Activated CD8-positive, alpha-beta T cell treated with anti-CD3 and anti-CD28 coated beads for 36 hours (primary cell): ENCODE measurements at regions of chr21 and their contacts with region 1.

Region 1: DNA sequence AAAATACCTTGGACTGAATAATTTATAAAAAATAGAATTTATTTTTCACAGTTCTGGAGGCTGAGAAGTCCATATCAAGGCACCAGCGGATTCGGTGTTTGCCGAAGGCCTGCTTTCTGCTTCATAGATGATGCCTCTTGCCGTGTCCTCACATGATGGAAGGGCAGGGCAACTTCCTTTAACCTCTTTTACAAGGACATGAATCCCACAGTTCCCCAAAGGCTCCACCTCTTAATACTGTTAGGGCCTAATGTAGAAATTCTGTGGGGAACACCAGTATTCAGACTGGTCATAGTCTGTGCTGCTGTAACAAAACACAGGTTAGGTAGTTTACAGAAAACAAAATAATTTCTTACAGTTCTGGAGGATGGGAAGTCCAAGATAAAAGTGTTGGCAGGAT is 25.9 kb downstream of the DYRK1A start:
- DNase-seq: no peak
- ATAC-seq: no peak
- H3K4me3 Mint-ChIP-seq: no peak overlapping the region
- H3K27ac Mint-ChIP-seq: peak overlapping the region; percentile 21
- H3K4me1 Mint-ChIP-seq: peaks cover 79% of the 10 kb centered on the region
- H3K27me3 Mint-ChIP-seq: no peaks in the 10 kb centered on the region
- CTCF ChIP-seq: no peak

Region 2: GRCh38 chr21:37380349-37381323 is 11.8 kb before region 1 on chr21:
- CTCF ChIA-PET with region 1: interaction called, 13 read pairs
- POLR2A ChIA-PET with region 1: interaction called, 3 read pairs
- intact Hi-C with region 1: no loop called
- DNase-seq: no peak
- ATAC-seq: no peak
- H3K4me3 Mint-ChIP-seq: no peak overlapping the region
- H3K27ac Mint-ChIP-seq: peak overlapping the region; percentile 17
- H3K4me1 Mint-ChIP-seq: peaks cover 84% of the 10 kb centered on the region
- H3K27me3 Mint-ChIP-seq: no peaks in the 10 kb centered on the region
- CTCF ChIP-seq: no peak

Region 3: DNA sequence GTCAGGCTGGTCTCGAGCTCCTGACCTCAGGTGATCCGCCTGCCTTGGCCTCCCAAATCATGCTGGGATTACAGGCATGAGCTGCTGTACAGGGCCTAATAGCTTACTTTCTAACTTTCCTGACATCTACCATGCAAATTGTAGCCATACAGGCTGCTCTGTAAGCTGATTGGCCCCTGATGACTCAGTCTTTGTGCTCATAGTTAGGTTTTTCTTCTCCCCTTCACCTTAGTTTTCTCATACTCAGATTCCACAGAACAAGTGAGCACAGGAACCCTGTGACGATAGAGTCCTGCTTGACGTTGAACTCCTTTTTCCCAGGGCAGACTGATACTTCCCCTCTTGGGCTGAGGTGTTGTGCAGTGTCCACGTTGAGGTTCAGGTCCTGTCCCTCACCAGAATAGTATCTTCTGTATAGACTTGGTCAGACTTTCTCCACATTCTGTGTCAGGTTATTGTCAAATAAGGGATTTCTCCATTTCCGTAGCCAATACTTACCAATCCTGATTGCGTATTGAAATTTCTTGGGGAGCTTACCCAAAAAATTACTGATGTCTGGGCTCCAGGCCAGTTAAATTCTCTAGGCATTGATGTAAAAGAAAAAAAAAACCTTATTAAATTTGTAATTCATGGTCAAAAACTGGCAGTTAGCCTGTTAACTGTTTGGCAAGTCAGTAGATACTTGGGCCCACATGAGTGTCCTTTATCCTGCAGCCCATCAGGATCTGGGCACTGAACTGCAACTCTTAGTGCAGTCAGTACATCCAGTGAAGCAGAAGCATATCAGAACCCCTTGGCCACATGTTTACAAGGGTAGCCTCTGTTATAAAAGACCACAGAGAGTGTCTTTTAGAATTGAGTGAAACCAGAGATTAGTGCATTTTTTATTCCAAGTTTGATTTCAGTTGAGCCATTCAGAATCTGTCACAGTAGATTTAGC is 92.4 kb after region 1 on chr21:
- CTCF ChIA-PET with region 1: no interaction called
- POLR2A ChIA-PET with region 1: no interaction called
- intact Hi-C with region 1: no loop called
- DNase-seq: no peak
- ATAC-seq: no peak
- H3K4me3 Mint-ChIP-seq: no peak overlapping the region
- H3K27ac Mint-ChIP-seq: peak overlapping the region; percentile 28
- H3K4me1 Mint-ChIP-seq: peaks cover 15% of the 10 kb centered on the region
- H3K27me3 Mint-ChIP-seq: no peaks in the 10 kb centered on the region
- CTCF ChIP-seq: no peak